Activated naive CD4-positive, alpha-beta T cell treated with anti-CD3 and anti-CD28 coated beads for 36 hours (primary cell): ENCODE measurements at regions of chr2 and their contacts with region 1.

Region 1: DNA sequence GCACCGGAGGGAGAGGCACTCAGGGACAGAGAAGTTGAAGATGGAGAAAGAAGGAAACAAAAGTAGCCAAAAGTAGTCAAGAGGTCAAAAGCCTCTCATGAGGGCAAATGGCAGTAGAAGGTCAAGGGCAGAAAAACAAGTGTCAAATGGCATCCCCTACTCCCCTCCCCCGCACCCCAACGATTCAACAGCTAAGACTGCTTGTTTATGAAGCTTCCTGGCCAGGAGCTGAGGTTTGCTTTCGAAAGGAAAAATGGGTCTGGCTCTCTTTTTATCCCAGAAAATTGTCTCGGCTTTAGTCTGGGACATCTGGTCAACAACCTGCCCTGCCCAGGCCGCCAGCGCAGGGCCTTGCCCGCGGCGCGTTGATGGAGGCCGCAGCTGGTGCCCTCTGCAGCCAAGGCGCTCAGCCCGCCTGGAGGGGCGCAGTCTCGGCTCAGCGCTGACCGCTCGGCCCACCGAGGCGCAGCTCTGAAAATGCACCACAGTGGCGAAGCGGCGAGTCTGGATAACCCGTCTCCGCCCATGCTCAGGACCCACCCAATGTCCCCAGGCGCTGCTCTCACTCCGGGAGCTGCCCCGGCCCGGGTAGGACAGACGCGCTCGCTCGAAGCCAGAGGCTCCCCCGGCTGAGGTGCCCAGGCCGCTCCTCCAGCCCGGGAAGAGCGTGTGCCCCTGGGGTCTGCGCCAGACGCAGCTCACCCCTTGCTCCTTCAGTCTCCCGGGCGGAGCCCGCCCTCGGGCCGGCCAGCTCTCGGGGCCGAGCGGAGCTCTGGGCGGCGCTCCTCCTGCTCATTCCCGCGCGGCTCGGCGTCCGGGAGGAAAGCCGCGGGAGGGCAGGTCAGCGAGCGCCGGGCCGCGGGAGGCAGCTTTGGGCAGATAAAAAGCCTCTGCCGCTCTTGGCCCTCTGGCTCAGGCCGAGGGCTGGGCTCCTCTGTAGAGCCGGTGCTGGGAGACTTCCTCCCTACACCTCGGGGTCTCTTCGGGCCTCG is 1.8 kb upstream of the TBR1 start:
- DNase-seq: no peak
- H3K4me3 Mint-ChIP-seq: peak overlapping the region; percentile 52
- H3K27ac Mint-ChIP-seq: no peak overlapping the region
- H3K4me1 Mint-ChIP-seq: peaks cover 47% of the 10 kb centered on the region
- H3K27me3 Mint-ChIP-seq: peaks cover 51% of the 10 kb centered on the region

Region 2: GRCh38 chr2:161238560-161239325 is 175.6 kb before region 1 on chr2:
- CTCF ChIA-PET with region 1: no interaction called
- intact Hi-C with region 1: loop called (anchors 5 kb)
- DNase-seq: peak; percentile 71
- H3K4me3 Mint-ChIP-seq: peak overlapping the region; percentile 84
- H3K27ac Mint-ChIP-seq: peak overlapping the region; percentile 47
- H3K4me1 Mint-ChIP-seq: peaks cover 47% of the 10 kb centered on the region
- H3K27me3 Mint-ChIP-seq: no peaks in the 10 kb centered on the region

Region 3: DNA sequence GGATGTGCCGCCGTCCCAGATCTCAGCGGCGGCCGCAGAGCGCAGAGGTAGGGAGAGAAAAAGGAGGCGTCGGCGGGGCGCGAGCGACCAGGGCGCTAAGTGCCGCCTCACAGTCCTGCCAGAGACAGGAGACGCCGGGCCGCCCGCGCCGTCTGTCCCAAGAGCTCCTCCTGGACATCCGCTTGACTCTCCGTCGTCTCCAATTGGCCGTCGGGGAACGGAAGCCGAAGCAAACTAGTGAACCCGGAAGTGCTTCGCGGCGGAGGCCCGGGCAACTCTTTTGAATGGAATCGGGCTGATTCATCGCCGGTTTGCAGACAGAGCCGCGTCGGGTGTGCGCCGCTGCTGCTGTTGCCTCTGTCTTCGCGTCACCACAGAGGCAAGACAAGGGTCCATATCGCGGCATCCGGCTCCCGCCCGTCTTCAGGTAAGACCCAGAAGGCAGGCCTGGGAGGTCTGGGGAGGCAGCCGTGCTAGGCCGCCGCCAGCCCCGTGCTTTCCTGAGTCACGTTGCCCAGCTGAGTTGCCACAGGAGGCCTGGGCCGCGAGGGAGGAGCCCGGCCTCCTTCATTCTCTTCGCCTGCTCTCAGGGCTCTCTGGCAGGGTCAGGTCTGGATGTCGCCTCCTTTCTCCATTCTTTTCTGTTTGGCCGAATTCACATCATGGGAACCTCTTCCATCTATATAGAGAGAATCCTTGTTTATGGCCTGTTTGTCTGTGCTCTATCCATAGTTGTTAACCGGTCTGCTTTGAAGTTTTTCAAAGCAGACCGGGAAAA is 106.0 kb before region 1 on chr2 and contains the start of gene PSMD14:
- CTCF ChIA-PET with region 1: no interaction called
- intact Hi-C with region 1: loop called (anchors 2 kb)
- DNase-seq: peak; percentile 96
- H3K4me3 Mint-ChIP-seq: peak within 1 kb of the TSS; percentile 86
- H3K27ac Mint-ChIP-seq: peak within 1 kb of the TSS; percentile 91
- H3K4me1 Mint-ChIP-seq: peaks cover 35% of the 10 kb centered on the region
- H3K27me3 Mint-ChIP-seq: no peaks in the 10 kb centered on the region
- total RNA-seq, gene PSMD14: 76.2 to 79.4 TPM

Region 4: DNA sequence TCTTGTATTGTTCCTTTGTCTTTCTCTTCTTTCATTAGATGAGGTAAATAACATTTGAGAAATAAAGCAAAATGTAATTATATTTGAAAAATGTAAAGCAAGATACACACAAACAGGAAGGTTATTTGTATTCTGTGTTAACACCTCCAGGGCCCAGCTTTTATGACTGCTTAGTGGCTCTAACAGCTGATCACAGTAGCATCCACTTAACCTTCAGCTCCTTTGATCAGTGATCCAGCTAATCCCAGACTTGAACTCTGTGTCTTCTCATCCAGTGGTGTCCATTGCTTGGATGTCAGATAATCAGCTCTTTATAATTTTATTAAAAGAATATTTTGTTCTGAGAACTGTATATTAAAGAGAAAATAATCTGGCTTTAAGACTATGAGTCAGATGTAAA is 61.6 kb before region 1 on chr2:
- CTCF ChIA-PET with region 1: no interaction called
- intact Hi-C with region 1: no loop called
- DNase-seq: no peak
- H3K4me3 Mint-ChIP-seq: no peak overlapping the region
- H3K27ac Mint-ChIP-seq: no peak overlapping the region
- H3K4me1 Mint-ChIP-seq: peaks cover 8% of the 10 kb centered on the region
- H3K27me3 Mint-ChIP-seq: no peaks in the 10 kb centered on the region

Region 5: GRCh38 chr2:161426922-161427663 is 12.8 kb after region 1 on chr2:
- CTCF ChIA-PET with region 1: interaction called, 3 read pairs
- intact Hi-C with region 1: loop called (anchors 1 kb)
- DNase-seq: peak; percentile 29
- H3K4me3 Mint-ChIP-seq: peak overlapping the region; percentile 56
- H3K27ac Mint-ChIP-seq: peak overlapping the region; percentile 31
- H3K4me1 Mint-ChIP-seq: peaks cover 29% of the 10 kb centered on the region
- H3K27me3 Mint-ChIP-seq: peaks cover 76% of the 10 kb centered on the region

Region 6: GRCh38 chr2:161576421-161576820 is 162.1 kb after region 1 on chr2:
- CTCF ChIA-PET with region 1: no interaction called
- intact Hi-C with region 1: loop called (anchors 5 kb)
- DNase-seq: peak; percentile 36
- H3K4me3 Mint-ChIP-seq: no peak overlapping the region
- H3K27ac Mint-ChIP-seq: no peak overlapping the region
- H3K4me1 Mint-ChIP-seq: no peaks in the 10 kb centered on the region
- H3K27me3 Mint-ChIP-seq: no peaks in the 10 kb centered on the region

Region 7: GRCh38 chr2:161695225-161695624 is 280.9 kb after region 1 on chr2:
- CTCF ChIA-PET with region 1: no interaction called
- intact Hi-C with region 1: no loop called
- DNase-seq: no peak
- H3K4me3 Mint-ChIP-seq: no peak overlapping the region
- H3K27ac Mint-ChIP-seq: no peak overlapping the region
- H3K4me1 Mint-ChIP-seq: no peaks in the 10 kb centered on the region
- H3K27me3 Mint-ChIP-seq: no peaks in the 10 kb centered on the region